MCF 10A (cell line): ENCODE measurements at regions of chr6 and their contacts with region 1.

Region 1: GRCh38 chr6:148192310-148192709 is 150.3 kb upstream of the SASH1 start:
- DNase-seq: peak; percentile 52
- H3K4me3 Mint-ChIP-seq: peak overlapping the region; percentile 60
- H3K27ac Mint-ChIP-seq: peak overlapping the region; percentile 92
- H3K4me1 Mint-ChIP-seq: peaks cover 34% of the 10 kb centered on the region
- H3K27me3 Mint-ChIP-seq: no peaks in the 10 kb centered on the region
- CTCF ChIP-seq: no peak

Region 2: DNA sequence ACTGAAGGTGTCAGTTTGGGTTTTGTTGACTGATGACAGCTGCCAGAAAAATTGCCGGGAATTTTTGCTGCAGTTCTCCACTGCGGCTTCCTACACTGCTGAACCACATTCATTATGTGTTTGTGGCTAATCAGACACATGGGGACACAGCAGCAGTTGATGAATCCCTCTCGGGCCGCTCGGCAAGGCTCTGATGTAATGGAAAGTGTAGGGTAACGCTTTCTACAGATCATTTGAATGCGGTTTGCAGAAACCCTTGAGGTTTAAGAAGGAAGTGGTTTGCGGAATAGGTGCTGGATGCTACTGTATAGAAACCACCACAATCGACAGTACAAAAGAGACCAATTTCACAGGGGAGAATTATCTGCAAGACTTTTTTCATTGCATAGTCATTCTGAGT is 11.7 kb after region 1 on chr6:
- CTCF ChIA-PET with region 1: interaction called, 4 read pairs
- POLR2A ChIA-PET with region 1: interaction called, 17 read pairs
- intact Hi-C with region 1: no loop called
- DNase-seq: no peak
- H3K4me3 Mint-ChIP-seq: no peak overlapping the region
- H3K27ac Mint-ChIP-seq: no peak overlapping the region
- H3K4me1 Mint-ChIP-seq: peaks cover 12% of the 10 kb centered on the region
- H3K27me3 Mint-ChIP-seq: no peaks in the 10 kb centered on the region
- CTCF ChIP-seq: no peak

Region 3: GRCh38 chr6:148226284-148226683 is 34.0 kb after region 1 on chr6:
- CTCF ChIA-PET with region 1: interaction called, 3 read pairs
- POLR2A ChIA-PET with region 1: interaction called, 101 read pairs
- intact Hi-C with region 1: no loop called
- DNase-seq: no peak
- H3K4me3 Mint-ChIP-seq: no peak overlapping the region
- H3K27ac Mint-ChIP-seq: no peak overlapping the region
- H3K4me1 Mint-ChIP-seq: peaks cover 11% of the 10 kb centered on the region
- H3K27me3 Mint-ChIP-seq: no peaks in the 10 kb centered on the region
- CTCF ChIP-seq: no peak

Region 4: DNA sequence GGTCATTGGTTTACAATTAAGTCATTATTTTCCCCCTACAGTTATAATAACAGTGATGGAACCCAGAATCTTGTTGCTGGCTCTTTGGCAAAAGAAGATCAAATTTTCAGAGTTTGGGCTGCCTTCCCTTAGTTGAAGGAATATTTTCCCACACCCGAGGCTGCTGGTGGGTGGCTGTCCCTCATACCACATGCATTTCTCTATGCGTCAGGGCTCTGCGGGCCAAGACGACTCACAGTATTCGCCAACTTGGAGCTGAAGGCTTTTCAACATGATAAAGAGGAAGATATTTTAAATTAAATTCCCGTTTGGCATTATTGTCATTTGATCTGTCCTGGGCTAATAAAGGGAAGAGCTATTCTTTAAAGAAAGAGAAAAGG is 48.1 kb after region 1 on chr6:
- CTCF ChIA-PET with region 1: interaction called, 8 read pairs
- POLR2A ChIA-PET with region 1: interaction called, 101 read pairs
- intact Hi-C with region 1: no loop called
- DNase-seq: no peak
- H3K4me3 Mint-ChIP-seq: no peak overlapping the region
- H3K27ac Mint-ChIP-seq: no peak overlapping the region
- H3K4me1 Mint-ChIP-seq: peaks cover 29% of the 10 kb centered on the region
- H3K27me3 Mint-ChIP-seq: no peaks in the 10 kb centered on the region
- CTCF ChIP-seq: no peak

Region 5: DNA sequence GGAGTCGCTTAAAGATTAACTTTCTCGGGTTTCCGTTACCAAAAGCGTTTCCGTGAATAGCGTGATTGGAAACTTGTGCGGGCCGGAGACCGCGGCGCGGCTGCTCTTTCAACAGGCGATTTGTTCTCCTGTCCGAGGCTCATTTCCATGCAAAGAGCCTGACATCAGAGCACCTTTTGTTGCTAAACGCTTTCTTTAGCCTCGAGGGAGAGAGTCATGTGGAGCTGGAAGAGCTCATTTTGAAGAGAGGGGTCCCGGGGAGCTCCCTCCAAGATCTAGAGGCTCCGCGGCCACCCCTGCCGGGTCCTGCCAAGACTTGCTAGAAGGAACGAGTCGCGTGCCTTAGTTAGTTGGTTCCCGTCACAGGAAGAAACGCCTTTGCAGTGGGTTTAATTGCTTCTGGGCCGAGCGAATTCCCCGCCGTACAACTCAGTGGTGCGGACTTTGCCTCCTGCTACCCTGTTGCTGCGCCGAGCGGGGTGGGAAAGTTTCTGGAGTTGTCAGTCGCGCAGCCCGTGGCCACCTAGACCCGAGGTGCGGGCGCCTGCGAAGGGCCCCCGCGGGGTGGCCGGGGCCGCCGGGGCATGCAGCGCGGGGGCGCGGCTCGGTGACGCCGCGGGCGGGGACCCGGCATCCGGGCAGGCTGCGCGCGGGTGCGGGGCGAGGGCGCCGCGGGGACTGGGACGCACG is 150.2 kb after region 1 on chr6 and contains the start of gene SASH1:
- CTCF ChIA-PET with region 1: no interaction called
- POLR2A ChIA-PET with region 1: interaction called, 13 read pairs
- intact Hi-C with region 1: no loop called
- DNase-seq: peak; percentile 91
- H3K4me3 Mint-ChIP-seq: peak within 1 kb of the TSS; percentile 90
- H3K27ac Mint-ChIP-seq: peak within 1 kb of the TSS; percentile 99
- H3K4me1 Mint-ChIP-seq: peaks cover 34% of the 10 kb centered on the region
- H3K27me3 Mint-ChIP-seq: no peaks in the 10 kb centered on the region
- CTCF ChIP-seq: no peak
- total RNA-seq, gene SASH1: 16.7 and 18.4 TPM in 2 replicates